ENCODE measurements at regions of chr2 and their contacts with region 1.

Region 1: DNA sequence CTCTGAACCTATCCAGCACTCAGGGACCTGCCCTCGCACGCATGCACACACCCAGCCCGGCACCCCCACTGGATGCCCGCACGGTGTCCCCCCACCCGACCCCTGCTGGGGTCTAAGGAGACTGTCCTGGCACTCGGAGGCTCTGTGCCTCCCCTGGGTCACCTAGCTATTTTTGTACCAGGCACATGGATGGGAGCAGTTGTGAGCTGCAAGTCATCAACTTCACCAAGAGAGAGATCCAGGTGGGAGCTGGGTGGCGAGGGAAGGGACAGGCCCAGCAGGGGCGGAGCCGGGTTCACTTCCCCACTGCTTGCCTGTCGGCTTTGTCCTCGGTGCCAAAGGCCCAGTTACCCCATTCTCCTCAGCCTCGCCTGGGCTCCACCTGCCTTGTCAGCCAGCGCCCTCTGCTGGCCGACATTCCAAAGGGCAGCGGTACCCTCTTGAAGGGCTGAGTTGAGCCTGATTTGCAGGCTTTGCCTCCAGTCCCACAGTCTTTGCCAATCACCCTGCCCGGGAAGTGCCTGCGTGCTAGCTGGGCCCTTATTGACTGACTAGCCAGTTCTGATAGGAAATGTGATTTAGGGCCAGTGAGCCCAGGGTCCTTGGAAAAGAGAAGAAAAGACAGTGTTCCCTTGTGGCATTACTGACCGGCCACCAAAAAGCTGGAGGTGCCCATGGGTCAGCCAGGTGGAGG is 5.8 kb downstream of the NT5DC4 start:
- DNase-seq: peak; percentile 96
- H3K4me3 Mint-ChIP-seq: peak overlapping the region; percentile 67
- H3K27ac Mint-ChIP-seq: peak overlapping the region; percentile 92
- H3K4me1 Mint-ChIP-seq: peaks cover 38% of the 10 kb centered on the region
- H3K27me3 Mint-ChIP-seq: no peaks in the 10 kb centered on the region
- CTCF ChIP-seq: peak; percentile 92

Region 2: GRCh38 chr2:112601751-112602150 is 124.9 kb before region 1 on chr2:
- CTCF ChIA-PET with region 1: interaction called, 21 read pairs
- intact Hi-C with region 1: loop called (anchors 1 kb)
- DNase-seq: no peak
- H3K4me3 Mint-ChIP-seq: no peak overlapping the region
- H3K27ac Mint-ChIP-seq: no peak overlapping the region
- H3K4me1 Mint-ChIP-seq: peaks cover 27% of the 10 kb centered on the region
- H3K27me3 Mint-ChIP-seq: no peaks in the 10 kb centered on the region
- CTCF ChIP-seq: no peak

Region 3: DNA sequence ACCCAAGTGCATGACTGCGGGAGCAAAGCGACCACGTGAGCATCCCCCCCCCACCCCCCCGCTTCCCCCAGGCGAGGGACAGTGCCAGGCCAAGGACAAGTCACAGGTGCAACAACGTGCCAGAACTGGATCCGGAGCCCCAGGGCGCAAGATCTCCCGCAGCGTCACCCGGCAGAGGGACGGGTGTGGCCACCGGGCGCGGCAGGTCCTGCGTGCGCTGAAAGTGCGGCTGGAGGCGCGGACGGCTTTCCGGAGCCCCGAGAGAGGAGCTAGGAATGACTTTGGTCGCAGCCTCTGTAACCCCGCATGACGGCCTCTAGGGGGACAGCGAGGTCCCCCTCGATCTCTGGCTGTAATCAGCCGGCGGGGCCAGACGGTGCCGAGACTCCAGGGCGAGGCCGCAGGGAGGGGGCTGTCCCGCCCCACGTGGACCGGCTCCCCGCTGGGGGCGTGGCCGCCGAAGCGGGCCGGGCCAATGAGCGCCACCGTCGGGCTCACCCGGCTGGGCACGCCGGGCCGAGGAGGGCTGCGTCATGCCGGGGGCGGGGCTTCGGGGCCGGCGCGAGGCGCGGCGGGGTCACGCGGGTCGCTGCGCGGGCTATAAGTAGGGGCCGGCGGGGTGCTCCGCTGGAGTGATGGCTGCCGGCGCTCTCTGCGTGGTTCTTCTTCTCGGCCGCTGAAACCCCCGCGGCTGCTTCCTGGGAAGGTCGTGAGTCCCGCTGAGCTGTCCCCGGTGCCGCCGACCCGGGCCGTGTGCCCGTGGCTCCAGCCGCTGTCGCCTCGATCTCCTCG is 81.1 kb before region 1 on chr2 and contains the start of gene SLC20A1:
- CTCF ChIA-PET with region 1: interaction called, 22 read pairs
- intact Hi-C with region 1: no loop called
- DNase-seq: peak; percentile 99
- H3K4me3 Mint-ChIP-seq: peak within 1 kb of the TSS; percentile 88
- H3K27ac Mint-ChIP-seq: peak within 1 kb of the TSS; percentile 95
- H3K4me1 Mint-ChIP-seq: peaks cover 58% of the 10 kb centered on the region
- H3K27me3 Mint-ChIP-seq: no peaks in the 10 kb centered on the region
- CTCF ChIP-seq: peak; percentile 58
- total RNA-seq, gene SLC20A1: 71.7 and 84.5 TPM in 2 replicates

Region 4: DNA sequence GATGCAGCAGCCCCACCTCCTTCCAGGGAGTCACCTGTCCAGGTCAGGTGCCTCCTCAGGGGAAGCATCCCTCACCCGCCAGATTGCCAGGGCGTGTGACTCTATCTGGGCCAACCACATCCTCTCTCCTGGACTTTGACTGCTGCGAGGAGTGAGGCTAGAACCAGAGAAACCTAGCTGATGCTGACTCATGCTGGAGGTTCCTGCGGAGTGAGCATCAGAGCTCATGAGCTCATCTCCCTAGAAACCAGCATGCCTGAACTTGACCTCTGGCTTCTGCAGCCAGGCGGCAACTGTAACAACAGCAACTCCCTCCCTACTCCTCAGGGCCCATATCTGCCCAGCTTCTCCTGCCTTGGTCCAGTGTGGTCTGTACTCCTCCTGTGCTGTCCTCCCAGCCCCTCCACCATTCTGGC is 34.1 kb before region 1 on chr2:
- CTCF ChIA-PET with region 1: interaction called, 25 read pairs
- intact Hi-C with region 1: no loop called
- DNase-seq: peak; percentile 77
- H3K4me3 Mint-ChIP-seq: no peak overlapping the region
- H3K27ac Mint-ChIP-seq: peak overlapping the region; percentile 76
- H3K4me1 Mint-ChIP-seq: peaks cover 42% of the 10 kb centered on the region
- H3K27me3 Mint-ChIP-seq: no peaks in the 10 kb centered on the region
- CTCF ChIP-seq: no peak

Region 5: DNA sequence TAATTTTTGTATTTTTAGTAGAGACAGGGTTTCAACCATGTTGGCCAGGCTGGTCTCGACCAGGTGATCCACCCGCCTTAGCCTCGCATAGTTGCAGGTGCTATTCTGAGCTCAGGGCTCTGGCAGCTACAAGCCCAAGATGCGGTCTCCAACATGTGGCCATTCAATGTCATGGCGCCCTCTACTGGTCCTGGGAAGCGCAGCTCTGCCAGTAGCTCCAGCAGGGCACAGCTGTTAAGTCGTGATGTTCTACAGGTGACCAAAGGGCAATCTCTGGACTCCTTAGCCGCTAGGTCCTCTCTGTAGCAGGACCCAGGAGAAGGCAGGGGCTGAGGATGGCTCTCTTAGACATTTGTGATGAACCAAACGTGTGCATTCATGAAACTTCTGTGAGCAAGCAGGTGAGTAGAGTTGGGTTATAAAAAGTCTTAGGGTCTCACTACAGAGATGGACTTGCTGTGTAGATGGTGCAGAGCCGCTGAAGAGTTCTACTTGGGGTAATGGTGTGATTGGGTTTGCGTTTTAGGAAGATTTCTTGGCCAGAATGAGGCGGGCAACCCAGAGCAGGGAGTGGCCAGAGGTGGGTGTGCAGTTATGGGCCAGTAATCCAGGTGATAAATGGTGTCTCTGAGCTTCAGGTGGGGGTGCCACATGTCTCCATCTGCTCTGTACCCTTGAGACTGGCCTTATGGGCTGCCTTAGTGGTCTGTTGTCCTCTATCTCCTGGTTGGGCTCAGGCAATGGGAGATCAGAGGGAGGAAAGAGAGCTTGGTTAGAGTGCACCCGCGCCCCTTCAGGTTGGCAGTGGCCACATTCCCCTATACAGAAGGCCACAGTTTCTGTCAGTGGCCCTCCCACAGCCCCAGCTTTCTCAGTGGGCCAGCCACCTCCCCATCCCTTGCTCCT is 215.4 kb after region 1 on chr2:
- CTCF ChIA-PET with region 1: interaction called, 11 read pairs
- intact Hi-C with region 1: no loop called
- DNase-seq: peak; percentile 90
- H3K4me3 Mint-ChIP-seq: no peak overlapping the region
- H3K27ac Mint-ChIP-seq: peak overlapping the region; percentile 44
- H3K4me1 Mint-ChIP-seq: peaks cover 55% of the 10 kb centered on the region
- H3K27me3 Mint-ChIP-seq: no peaks in the 10 kb centered on the region
- CTCF ChIP-seq: peak; percentile 81

Measured in Calu3 (cell line).